ENCODE measurements at regions of chr7 and their contacts with region 1.

Region 1: DNA sequence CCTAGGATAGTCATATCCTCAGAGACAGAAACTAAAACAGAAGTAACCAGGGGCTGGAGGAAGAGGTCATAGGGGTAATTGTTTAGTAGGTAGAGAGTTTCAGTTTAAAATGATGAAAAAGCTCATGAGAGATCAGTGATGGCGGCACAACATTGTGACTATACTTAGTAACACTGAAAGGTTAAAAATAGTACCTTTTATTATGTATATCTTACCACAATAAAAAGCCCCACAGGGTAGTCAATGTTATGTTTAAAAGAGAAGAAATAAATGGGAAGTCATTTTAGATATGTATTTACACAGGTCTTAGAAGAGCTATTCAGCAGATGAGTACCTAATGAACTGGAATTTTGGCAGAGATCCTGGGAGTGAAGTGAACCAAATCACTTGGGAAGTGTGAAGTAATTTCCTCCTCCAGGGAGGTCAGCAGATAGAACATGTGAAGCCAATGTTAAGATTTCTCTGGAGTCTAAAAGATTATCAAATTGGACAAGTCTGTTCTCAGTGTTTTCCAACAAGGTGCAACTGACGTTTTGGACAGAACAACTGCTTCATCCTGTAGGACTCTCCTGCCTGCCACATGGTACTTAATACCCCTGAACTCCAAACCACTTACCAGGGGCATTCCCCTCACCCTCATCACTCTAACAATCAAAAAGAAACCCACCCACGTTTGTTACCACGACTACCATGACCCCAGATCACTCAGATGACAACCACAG is 6.4 kb downstream of the CDCA7L start:
- DNase-seq: peak; percentile 82
- H3K4me3 Mint-ChIP-seq: peak overlapping the region; percentile 23
- H3K27ac Mint-ChIP-seq: peak overlapping the region; percentile 85
- H3K4me1 Mint-ChIP-seq: peaks cover 59% of the 10 kb centered on the region
- H3K27me3 Mint-ChIP-seq: no peaks in the 10 kb centered on the region

Region 2: GRCh38 chr7:21305455-21306235 is 633.7 kb before region 1 on chr7:
- CTCF ChIA-PET with region 1: no interaction called
- POLR2A ChIA-PET with region 1: no interaction called
- intact Hi-C with region 1: loop called (anchors 1 kb)
- DNase-seq: no peak
- H3K4me3 Mint-ChIP-seq: no peak overlapping the region
- H3K27ac Mint-ChIP-seq: no peak overlapping the region
- H3K4me1 Mint-ChIP-seq: peaks cover 22% of the 10 kb centered on the region
- H3K27me3 Mint-ChIP-seq: no peaks in the 10 kb centered on the region

Region 3: DNA sequence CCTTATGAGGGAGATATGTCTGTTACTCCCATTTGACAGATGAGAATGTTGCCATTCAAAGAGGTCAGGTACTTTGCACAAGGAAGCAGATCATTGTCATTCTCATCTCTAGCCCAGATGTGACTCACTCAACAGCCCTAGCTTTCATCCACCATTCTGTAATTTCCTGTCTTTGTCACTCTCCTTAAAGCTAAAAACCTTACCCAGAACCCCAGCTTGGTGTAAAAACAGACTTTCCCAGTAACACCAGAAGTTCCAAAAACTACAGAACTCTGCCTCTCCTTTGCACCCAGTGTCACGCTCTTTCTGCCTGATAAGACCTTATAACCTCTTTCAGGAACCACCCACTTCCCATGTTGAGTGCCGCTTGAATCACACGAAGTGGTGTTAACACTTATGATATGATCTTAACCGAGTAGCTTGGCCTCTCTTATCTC is 600.6 kb before region 1 on chr7:
- CTCF ChIA-PET with region 1: no interaction called
- POLR2A ChIA-PET with region 1: interaction called, 4 read pairs
- intact Hi-C with region 1: loop called (anchors 1 kb)
- DNase-seq: peak; percentile 79
- H3K4me3 Mint-ChIP-seq: peak overlapping the region; percentile 31
- H3K27ac Mint-ChIP-seq: peak overlapping the region; percentile 96
- H3K4me1 Mint-ChIP-seq: peaks cover 37% of the 10 kb centered on the region
- H3K27me3 Mint-ChIP-seq: no peaks in the 10 kb centered on the region

Region 4: GRCh38 chr7:21365866-21366624 is 573.3 kb before region 1 on chr7:
- CTCF ChIA-PET with region 1: no interaction called
- POLR2A ChIA-PET with region 1: no interaction called
- intact Hi-C with region 1: loop called (anchors 2 kb)
- DNase-seq: no peak
- H3K4me3 Mint-ChIP-seq: no peak overlapping the region
- H3K27ac Mint-ChIP-seq: no peak overlapping the region
- H3K4me1 Mint-ChIP-seq: peaks cover 49% of the 10 kb centered on the region
- H3K27me3 Mint-ChIP-seq: peaks cover 3% of the 10 kb centered on the region

Region 5: DNA sequence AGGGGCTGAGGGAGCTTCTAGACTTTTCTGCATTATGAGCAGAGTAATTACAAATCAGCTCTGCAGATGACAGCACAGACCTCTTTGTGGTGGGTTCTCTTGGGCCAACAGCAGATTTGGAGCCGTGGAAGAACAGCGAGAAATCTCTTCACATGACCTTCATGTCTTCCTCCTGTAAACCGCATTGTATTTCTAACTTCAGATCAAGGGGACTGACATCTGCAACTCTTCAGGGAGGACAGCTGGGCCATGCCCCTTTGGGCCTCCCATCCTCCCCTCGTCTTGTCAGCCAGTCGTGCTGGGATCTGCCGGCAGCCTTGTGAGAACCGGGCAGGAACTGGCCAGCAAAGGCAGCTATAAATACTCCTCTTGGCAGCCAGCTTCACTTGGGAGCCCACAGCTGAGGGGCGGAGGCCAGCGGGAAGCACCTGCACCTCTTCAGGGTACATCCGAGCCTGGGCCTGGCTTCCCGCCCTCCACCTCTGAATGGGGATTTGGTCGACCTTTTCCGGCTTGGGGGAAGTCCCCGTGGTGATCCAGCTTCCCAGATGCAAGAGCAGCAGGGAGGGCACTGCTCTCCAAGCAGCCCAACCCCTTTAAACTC is 505.9 kb after region 1 on chr7:
- CTCF ChIA-PET with region 1: no interaction called
- POLR2A ChIA-PET with region 1: no interaction called
- intact Hi-C with region 1: loop called (anchors 5 kb)
- DNase-seq: no peak
- H3K4me3 Mint-ChIP-seq: no peak overlapping the region
- H3K27ac Mint-ChIP-seq: no peak overlapping the region
- H3K4me1 Mint-ChIP-seq: peaks cover 11% of the 10 kb centered on the region
- H3K27me3 Mint-ChIP-seq: peaks cover 18% of the 10 kb centered on the region

Region 6: DNA sequence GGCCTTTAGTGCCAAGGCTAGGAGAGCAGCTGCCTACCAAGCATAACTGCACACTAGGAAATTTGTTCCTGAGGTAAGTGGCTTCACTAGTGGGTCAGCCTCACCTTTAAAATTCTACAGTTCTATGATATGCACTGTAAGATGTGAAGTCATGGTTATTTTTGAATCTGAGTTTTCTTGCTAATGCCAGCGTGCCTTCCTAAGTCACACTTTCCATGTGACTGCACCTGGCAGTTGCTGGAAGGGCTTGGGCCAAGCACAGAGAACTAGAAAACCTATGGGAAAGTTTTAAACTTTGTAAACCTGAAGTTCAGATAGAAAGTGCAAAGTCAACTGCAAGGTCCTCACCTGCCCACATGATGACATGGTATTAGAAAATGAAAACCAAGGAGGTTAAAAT is 518.2 kb after region 1 on chr7:
- CTCF ChIA-PET with region 1: no interaction called
- POLR2A ChIA-PET with region 1: no interaction called
- intact Hi-C with region 1: no loop called
- DNase-seq: no peak
- H3K4me3 Mint-ChIP-seq: no peak overlapping the region
- H3K27ac Mint-ChIP-seq: no peak overlapping the region
- H3K4me1 Mint-ChIP-seq: no peaks in the 10 kb centered on the region
- H3K27me3 Mint-ChIP-seq: peaks cover 22% of the 10 kb centered on the region

Measured in activated CD4-positive, alpha-beta memory T cell treated with anti-CD3 and anti-CD28 coated beads for 36 hours (primary cell).